ENCODE measurements at regions of chr19 and their contacts with region 1.

Region 1: GRCh38 chr19:20661150-20661819 is at the start of gene ZNF626:
- DNase-seq: peak; percentile 93 to 99
- ATAC-seq: peak; percentile 98 to 99 (median 99)
- H3K4me3 ChIP-seq: peak within 1 kb of the TSS; percentile 57 to 88 (median 78)
- H3K27ac ChIP-seq: peak within 1 kb of the TSS; percentile 62 to 95 (median 89)
- H3K4me1 ChIP-seq: peaks cover 0 to 53% (median 33%) of the 10 kb centered on the region in 9 donors
- H3K27me3 ChIP-seq: no peaks in the 10 kb centered on the region
- CTCF ChIP-seq: no peak
- total RNA-seq, gene ZNF626: 7.4 to 12.5 (median 9.2) TPM

Region 2: GRCh38 chr19:20565321-20566018 is 95.8 kb before region 1 on chr19 and contains the start of gene ZNF737:
- intact Hi-C with region 1: loop called in 3 of 10 experiments (anchors 5 to 10 kb)
- DNase-seq: peak; percentile 97 to 98
- ATAC-seq: peak; percentile 96 to 99 (median 98)
- H3K4me3 ChIP-seq: peak within 1 kb of the TSS; percentile 50 to 90 (median 78)
- H3K27ac ChIP-seq: peak within 1 kb of the TSS; percentile 81 to 92 (median 90)
- H3K4me1 ChIP-seq: peaks cover 0 to 24% (median 14%) of the 10 kb centered on the region in 9 donors
- H3K27me3 ChIP-seq: no peaks in the 10 kb centered on the region
- CTCF ChIP-seq: peak in 8 of 9 donors; percentile 12 to 60 (median 48)
- total RNA-seq, gene ZNF737: 2.7 to 8.5 (median 4.2) TPM

Region 3: GRCh38 chr19:20612711-20613316 is 48.5 kb before region 1 on chr19:
- intact Hi-C with region 1: no loop called
- DNase-seq: no peak
- ATAC-seq: no peak
- H3K4me3 ChIP-seq: peak overlapping the region in 4 of 10 donors; percentile 19 to 35 (median 33)
- H3K27ac ChIP-seq: no peak overlapping the region
- H3K4me1 ChIP-seq: no peaks in the 10 kb centered on the region
- H3K27me3 ChIP-seq: no peaks in the 10 kb centered on the region
- CTCF ChIP-seq: no peak

Region 4: GRCh38 chr19:20776083-20777076 is 115.1 kb after region 1 on chr19 and contains the start of gene ZNF66:
- intact Hi-C with region 1: loop called in 2 of 10 experiments (anchors 5 to 10 kb)
- DNase-seq: peak; percentile 95 to 98
- ATAC-seq: peak; percentile 99 to 100 (median 100)
- H3K4me3 ChIP-seq: peak within 1 kb of the TSS; percentile 52 to 92 (median 78)
- H3K27ac ChIP-seq: peak within 1 kb of the TSS in 9 of 10 donors; percentile 17 to 77 (median 44)
- H3K4me1 ChIP-seq: peaks cover 0 to 16% (median 6%) of the 10 kb centered on the region in 9 donors
- H3K27me3 ChIP-seq: no peaks in the 10 kb centered on the region
- CTCF ChIP-seq: no peak
- total RNA-seq, gene ZNF66: 0.49 to 1.9 (median 1.0) TPM

Region 5: DNA sequence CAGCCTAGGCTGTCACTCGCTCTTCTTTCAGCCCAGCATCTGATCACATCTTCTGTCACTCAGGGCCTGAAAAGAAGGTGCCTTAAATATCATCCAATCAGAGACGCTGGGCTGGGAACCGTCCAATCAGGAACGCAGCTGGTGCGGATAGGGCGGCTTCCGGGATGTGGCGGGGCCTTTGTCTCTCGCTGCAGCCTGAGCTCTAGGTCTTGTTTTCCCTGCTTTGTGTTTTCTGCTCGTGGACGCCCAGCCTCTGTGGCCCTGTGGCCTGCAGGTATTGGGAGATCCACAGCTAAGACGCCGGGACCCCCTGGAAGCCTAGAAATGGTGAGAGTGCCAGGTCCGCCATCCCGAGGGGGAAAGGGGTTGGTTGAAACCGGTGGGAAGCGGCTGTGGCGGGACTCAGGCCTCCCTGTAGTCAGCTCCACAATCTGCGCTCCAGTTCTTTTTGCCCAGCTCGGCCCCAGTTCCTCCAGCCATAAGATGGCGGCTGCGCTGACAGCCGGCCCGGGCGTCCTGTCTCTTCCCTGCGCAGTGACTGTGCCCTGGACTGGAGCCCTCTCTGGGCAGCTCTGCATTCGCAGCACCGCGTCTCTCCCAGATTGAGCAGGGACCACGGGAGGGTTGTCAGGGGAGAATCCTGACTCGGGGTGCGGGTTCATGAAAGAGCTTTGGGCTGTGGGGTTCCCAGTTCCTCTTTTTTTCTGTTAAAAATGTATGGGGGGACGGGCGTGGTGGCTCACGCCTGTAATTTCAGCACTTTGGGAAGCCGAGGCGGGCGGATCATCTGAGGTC is 262.0 kb after region 1 on chr19 and contains the start of gene ZNF85:
- intact Hi-C with region 1: loop called in 1 of 10 experiments (anchors 5 kb)
- DNase-seq: peak; percentile 87 to 94
- ATAC-seq: peak; percentile 97 to 100 (median 100)
- H3K4me3 ChIP-seq: peak within 1 kb of the TSS; percentile 51 to 82 (median 72)
- H3K27ac ChIP-seq: peak within 1 kb of the TSS; percentile 2 to 88 (median 82)
- H3K4me1 ChIP-seq: peaks cover 0 to 17% (median 6%) of the 10 kb centered on the region in 9 donors
- H3K27me3 ChIP-seq: no peaks in the 10 kb centered on the region
- CTCF ChIP-seq: no peak
- total RNA-seq, gene ZNF85: 1.3 to 5.9 (median 3.0) TPM

Measured in heart right ventricle (tissue), 16 donors.